ENCODE measurements at regions of chr17 and their contacts with region 1.

Region 1: GRCh38 chr17:65750631-65751117 is 189.2 kb upstream of the AXIN2 start:
- DNase-seq: peak; percentile 99
- ATAC-seq: peak; percentile 95
- H3K4me3 ChIP-seq: no peak overlapping the region
- H3K27ac ChIP-seq: no peak overlapping the region
- H3K4me1 ChIP-seq: peaks cover 26% of the 10 kb centered on the region
- H3K27me3 ChIP-seq: no peaks in the 10 kb centered on the region
- CTCF ChIP-seq: no peak

Region 2: GRCh38 chr17:65627891-65628659 is 122.6 kb before region 1 on chr17:
- CTCF ChIA-PET with region 1: no interaction called
- POLR2A ChIA-PET with region 1: no interaction called
- intact Hi-C with region 1: loop called (anchors 5 kb)
- DNase-seq: peak; percentile 98
- ATAC-seq: peak; percentile 99
- H3K4me3 ChIP-seq: peak overlapping the region; percentile 29; the same call in 1 of the 2 replicates
- H3K27ac ChIP-seq: peak overlapping the region; percentile 63
- H3K4me1 ChIP-seq: peaks cover 25% of the 10 kb centered on the region
- H3K27me3 ChIP-seq: no peaks in the 10 kb centered on the region
- CTCF ChIP-seq: no peak

Region 3: DNA sequence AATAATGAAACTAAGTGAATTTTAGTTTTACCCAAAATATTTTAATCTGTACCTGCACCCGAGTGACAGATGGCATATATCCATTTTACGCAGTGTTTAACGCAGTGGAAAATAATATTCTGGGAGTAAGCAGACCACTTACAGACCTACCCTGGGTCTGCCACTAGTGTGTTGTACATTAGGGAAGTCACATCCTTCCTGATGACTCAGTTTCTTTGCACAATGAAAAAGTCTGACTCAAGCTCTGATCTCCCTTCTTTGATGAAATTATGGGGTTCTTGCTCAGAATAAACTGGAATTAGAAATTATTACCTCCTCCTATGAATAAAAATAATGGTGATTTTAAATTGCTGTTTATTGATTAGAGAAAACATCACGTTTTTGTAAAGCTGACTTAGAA is 66.0 kb before region 1 on chr17:
- CTCF ChIA-PET with region 1: no interaction called
- POLR2A ChIA-PET with region 1: no interaction called
- intact Hi-C with region 1: no loop called
- DNase-seq: peak; percentile 62
- ATAC-seq: peak; percentile 73
- H3K4me3 ChIP-seq: no peak overlapping the region
- H3K27ac ChIP-seq: no peak overlapping the region
- H3K4me1 ChIP-seq: 0 out of 2 replicates have a peak, but pooled peaks cover 8% of the 10 kb centered on the region
- H3K27me3 ChIP-seq: no peaks in the 10 kb centered on the region
- CTCF ChIP-seq: no peak

Region 4: GRCh38 chr17:65698381-65699061 is 52.2 kb before region 1 on chr17:
- CTCF ChIA-PET with region 1: no interaction called
- POLR2A ChIA-PET with region 1: no interaction called
- intact Hi-C with region 1: loop called (anchors 2 kb)
- DNase-seq: no peak
- ATAC-seq: no peak
- H3K4me3 ChIP-seq: no peak overlapping the region
- H3K27ac ChIP-seq: no peak overlapping the region
- H3K4me1 ChIP-seq: peaks cover 30% of the 10 kb centered on the region
- H3K27me3 ChIP-seq: no peaks in the 10 kb centered on the region
- CTCF ChIP-seq: no peak

Measured in PC-3 (cell line).